Activated B cell treated with CpG ODN at 0.5 μM for 24 hours (primary cell): ENCODE measurements at regions of chr15 and their contacts with region 1.

Region 1: GRCh38 chr15:92970656-92971055 is 70.5 kb downstream of the CHD2 start:
- DNase-seq: no peak
- ATAC-seq: no peak
- H3K4me3 Mint-ChIP-seq: no peak overlapping the region
- H3K27ac Mint-ChIP-seq: no peak overlapping the region
- H3K4me1 Mint-ChIP-seq: peaks cover 24% of the 10 kb centered on the region
- H3K27me3 Mint-ChIP-seq: no peaks in the 10 kb centered on the region
- CTCF ChIP-seq: no peak

Region 2: DNA sequence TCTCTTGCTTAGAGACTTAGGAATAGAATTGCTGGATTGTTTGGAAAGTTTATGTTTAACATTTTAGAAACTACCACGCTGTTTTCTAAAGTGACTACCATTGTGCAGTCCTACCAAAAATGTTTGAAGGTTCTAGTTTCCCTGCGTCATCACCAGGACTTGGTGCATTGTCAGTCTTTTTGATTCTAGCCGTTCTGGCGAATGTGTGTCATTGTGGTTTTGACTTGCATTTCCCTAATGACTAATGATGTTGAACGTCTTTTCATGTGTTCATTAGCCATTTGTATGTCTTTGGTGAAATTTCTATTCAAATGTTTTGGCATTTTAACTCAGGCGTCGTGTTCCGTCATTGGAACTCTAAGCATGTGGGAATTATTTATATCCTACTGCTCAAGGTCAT is 12.6 kb before region 1 on chr15:
- CTCF ChIA-PET with region 1: no interaction called
- POLR2A ChIA-PET with region 1: no interaction called
- intact Hi-C with region 1: loop called (anchors 2 kb)
- DNase-seq: no peak
- ATAC-seq: peak; percentile 25
- H3K4me3 Mint-ChIP-seq: no peak overlapping the region
- H3K27ac Mint-ChIP-seq: peak overlapping the region; percentile 36
- H3K4me1 Mint-ChIP-seq: peaks cover 10% of the 10 kb centered on the region
- H3K27me3 Mint-ChIP-seq: no peaks in the 10 kb centered on the region
- CTCF ChIP-seq: no peak

Region 3: GRCh38 chr15:93005133-93005532 is 34.5 kb after region 1 on chr15:
- CTCF ChIA-PET with region 1: no interaction called
- POLR2A ChIA-PET with region 1: no interaction called
- intact Hi-C with region 1: loop called (anchors 5 kb)
- DNase-seq: no peak
- ATAC-seq: no peak
- H3K4me3 Mint-ChIP-seq: no peak overlapping the region
- H3K27ac Mint-ChIP-seq: no peak overlapping the region
- H3K4me1 Mint-ChIP-seq: no peaks in the 10 kb centered on the region
- H3K27me3 Mint-ChIP-seq: no peaks in the 10 kb centered on the region
- CTCF ChIP-seq: no peak